Endothelial cell of umbilical vein (primary cell): ENCODE measurements at regions of chrX and their contacts with region 1.

Region 1: DNA sequence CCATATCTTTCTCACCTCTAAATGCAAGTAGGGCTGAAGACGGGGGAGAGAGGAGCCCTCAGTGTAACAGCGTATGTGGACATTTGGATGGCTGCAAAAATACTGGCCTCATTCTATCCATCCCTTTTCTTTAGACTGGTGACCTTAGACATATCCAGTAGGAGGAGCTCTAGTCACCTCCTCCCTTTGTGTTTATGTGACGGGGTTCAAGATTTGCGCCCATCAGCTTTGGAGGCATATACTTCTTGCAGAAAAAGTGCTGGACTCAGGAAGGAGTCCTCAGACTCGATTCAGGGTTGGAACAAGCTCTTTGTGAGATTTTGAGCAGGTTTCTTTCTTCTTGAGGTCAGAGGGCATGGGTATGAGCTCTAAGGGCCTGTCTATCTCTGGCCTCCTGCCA is 86.2 kb downstream of the MAMLD1 start:
- DNase-seq: no peak
- H3K4me3 ChIP-seq: no peak overlapping the region
- H3K27ac ChIP-seq: no peak overlapping the region
- H3K4me1 ChIP-seq: peaks cover 13% of the 10 kb centered on the region
- H3K27me3 ChIP-seq: no peaks in the 10 kb centered on the region
- CTCF ChIP-seq: no peak
- POLR2A ChIP-seq: no peak

Region 2: GRCh38 chrX:150375243-150375770 is 74.0 kb before region 1 on chrX:
- CTCF ChIA-PET with region 1: no interaction called
- POLR2A ChIA-PET with region 1: no interaction called
- dilution Hi-C with region 1: no loop called
- intact Hi-C with region 1: loop called (anchors 5 kb)
- DNase-seq: no peak
- H3K4me3 ChIP-seq: no peak overlapping the region
- H3K27ac ChIP-seq: no peak overlapping the region
- H3K4me1 ChIP-seq: no peaks in the 10 kb centered on the region
- H3K27me3 ChIP-seq: no peaks in the 10 kb centered on the region
- CTCF ChIP-seq: no peak
- POLR2A ChIP-seq: no peak

Region 3: GRCh38 chrX:150476181-150476699 is 26.9 kb after region 1 on chrX:
- CTCF ChIA-PET with region 1: no interaction called
- POLR2A ChIA-PET with region 1: no interaction called
- dilution Hi-C with region 1: no loop called
- intact Hi-C with region 1: no loop called
- DNase-seq: no peak
- H3K4me3 ChIP-seq: no peak overlapping the region
- H3K27ac ChIP-seq: no peak overlapping the region
- H3K4me1 ChIP-seq: no peaks in the 10 kb centered on the region
- H3K27me3 ChIP-seq: no peaks in the 10 kb centered on the region
- CTCF ChIP-seq: no peak
- POLR2A ChIP-seq: no peak

Region 4: GRCh38 chrX:150587585-150588503 is 138.5 kb after region 1 on chrX:
- CTCF ChIA-PET with region 1: no interaction called
- POLR2A ChIA-PET with region 1: no interaction called
- dilution Hi-C with region 1: no loop called
- intact Hi-C with region 1: loop called (anchors 5 kb)
- DNase-seq: peak; percentile 35
- H3K4me3 ChIP-seq: no peak overlapping the region
- H3K27ac ChIP-seq: no peak overlapping the region
- H3K4me1 ChIP-seq: no peaks in the 10 kb centered on the region
- H3K27me3 ChIP-seq: no peaks in the 10 kb centered on the region
- CTCF ChIP-seq: peak; percentile 40 to 51
- POLR2A ChIP-seq: no peak